PC-9 (cell line): ENCODE measurements at regions of chr9 and their contacts with region 1.

Region 1: GRCh38 chr9:136245219-136246150 is at the start of gene QSOX2:
- DNase-seq: peak in 1 of 2 experiments; percentile 85
- H3K4me3 ChIP-seq: peak within 1 kb of the TSS; percentile 97
- H3K27ac ChIP-seq: peak within 1 kb of the TSS; percentile 49; the same call in 1 of the 2 replicates
- H3K4me1 ChIP-seq: peaks cover 12% of the 10 kb centered on the region
- H3K27me3 ChIP-seq: peaks cover 26% of the 10 kb centered on the region; the same call in 1 of the 2 replicates
- CTCF ChIP-seq: no peak
- total RNA-seq, gene QSOX2: 34.6 and 40.8 TPM in 2 replicates

Region 2: GRCh38 chr9:136196441-136197371 is 48.8 kb before region 1 on chr9:
- CTCF ChIA-PET with region 1: no interaction called
- POLR2A ChIA-PET with region 1: no interaction called
- intact Hi-C with region 1: no loop called
- DNase-seq: peak; percentile 40 to 43
- H3K4me3 ChIP-seq: peak overlapping the region; percentile 6; the same call in 1 of the 2 replicates
- H3K27ac ChIP-seq: no peak overlapping the region
- H3K4me1 ChIP-seq: peaks cover 12% of the 10 kb centered on the region
- H3K27me3 ChIP-seq: peaks cover 23% of the 10 kb centered on the region; the same call in 1 of the 2 replicates
- CTCF ChIP-seq: no peak

Region 3: GRCh38 chr9:136211441-136212344 is 33.8 kb before region 1 on chr9:
- CTCF ChIA-PET with region 1: no interaction called
- POLR2A ChIA-PET with region 1: no interaction called
- intact Hi-C with region 1: no loop called
- DNase-seq: no peak
- H3K4me3 ChIP-seq: no peak overlapping the region
- H3K27ac ChIP-seq: no peak overlapping the region
- H3K4me1 ChIP-seq: no peaks in the 10 kb centered on the region
- H3K27me3 ChIP-seq: no peaks in the 10 kb centered on the region
- CTCF ChIP-seq: no peak

Region 4: GRCh38 chr9:136225748-136226679 is 19.5 kb before region 1 on chr9:
- CTCF ChIA-PET with region 1: interaction called, 3 read pairs
- POLR2A ChIA-PET with region 1: no interaction called
- intact Hi-C with region 1: loop called (anchors 1 kb)
- DNase-seq: peak in 1 of 2 experiments; percentile 61
- H3K4me3 ChIP-seq: no peak overlapping the region
- H3K27ac ChIP-seq: no peak overlapping the region
- H3K4me1 ChIP-seq: peaks cover 30% of the 10 kb centered on the region
- H3K27me3 ChIP-seq: no peaks in the 10 kb centered on the region
- CTCF ChIP-seq: peak; percentile 88